Caco-2 (cell line): ENCODE measurements at regions of chr1 and their contacts with region 1.

Region 1: GRCh38 chr1:178542560-178543356 is 29.8 kb downstream of the TEX35 start:
- DNase-seq: peak; percentile 88 to 97
- H3K4me3 ChIP-seq: peak overlapping the region; percentile 72
- H3K4me3 Mint-ChIP-seq: peak overlapping the region; percentile 90
- H3K27ac Mint-ChIP-seq: peak overlapping the region; percentile 91
- H3K4me1 ChIP-seq: peaks cover 21% of the 10 kb centered on the region
- H3K4me1 Mint-ChIP-seq: peaks cover 13% of the 10 kb centered on the region
- H3K27me3 ChIP-seq: no peaks in the 10 kb centered on the region
- H3K27me3 Mint-ChIP-seq: no peaks in the 10 kb centered on the region
- CTCF ChIP-seq: peak; percentile 85 to 98

Region 2: GRCh38 chr1:177629526-177629925 is 913.2 kb before region 1 on chr1:
- CTCF ChIA-PET with region 1: no interaction called
- POLR2A ChIA-PET with region 1: no interaction called
- intact Hi-C with region 1: no loop called
- DNase-seq: no peak
- H3K4me3 ChIP-seq: no peak overlapping the region
- H3K4me3 Mint-ChIP-seq: no peak overlapping the region
- H3K27ac Mint-ChIP-seq: no peak overlapping the region
- H3K4me1 ChIP-seq: no peaks in the 10 kb centered on the region
- H3K4me1 Mint-ChIP-seq: no peaks in the 10 kb centered on the region
- H3K27me3 ChIP-seq: no peaks in the 10 kb centered on the region
- H3K27me3 Mint-ChIP-seq: peaks cover 7% of the 10 kb centered on the region
- CTCF ChIP-seq: no peak

Region 3: GRCh38 chr1:178267646-178268094 is 275.1 kb before region 1 on chr1:
- CTCF ChIA-PET with region 1: interaction called, 13 read pairs
- POLR2A ChIA-PET with region 1: no interaction called
- intact Hi-C with region 1: no loop called
- DNase-seq: peak; percentile 34 to 47
- H3K4me3 ChIP-seq: no peak overlapping the region
- H3K4me3 Mint-ChIP-seq: peak overlapping the region; percentile 59
- H3K27ac Mint-ChIP-seq: peak overlapping the region; percentile 96
- H3K4me1 ChIP-seq: peaks cover 73% of the 10 kb centered on the region
- H3K4me1 Mint-ChIP-seq: peaks cover 48% of the 10 kb centered on the region
- H3K27me3 ChIP-seq: no peaks in the 10 kb centered on the region
- H3K27me3 Mint-ChIP-seq: no peaks in the 10 kb centered on the region
- CTCF ChIP-seq: no peak

Region 4: DNA sequence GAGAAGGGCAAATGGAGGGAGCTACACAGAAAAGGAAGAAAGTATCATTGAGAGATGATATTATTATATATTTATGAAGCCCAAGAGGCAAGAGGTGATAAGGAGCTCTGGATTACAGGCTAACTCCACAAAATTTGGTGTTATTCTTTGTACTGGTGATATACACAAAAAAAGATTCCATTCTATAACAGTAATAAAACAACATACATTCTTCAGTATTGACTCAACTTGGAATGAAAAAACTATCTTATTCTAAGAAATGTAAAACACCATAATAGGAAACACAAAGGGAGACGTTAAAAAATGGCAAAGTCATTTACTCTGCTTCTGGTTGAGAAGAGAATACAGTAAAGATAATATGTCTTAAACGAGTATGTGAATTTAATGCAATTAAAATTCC is 69.5 kb after region 1 on chr1:
- CTCF ChIA-PET with region 1: no interaction called
- POLR2A ChIA-PET with region 1: no interaction called
- intact Hi-C with region 1: loop called (anchors 5 kb)
- DNase-seq: no peak
- H3K4me3 ChIP-seq: no peak overlapping the region
- H3K4me3 Mint-ChIP-seq: no peak overlapping the region
- H3K27ac Mint-ChIP-seq: no peak overlapping the region
- H3K4me1 ChIP-seq: no peaks in the 10 kb centered on the region
- H3K4me1 Mint-ChIP-seq: no peaks in the 10 kb centered on the region
- H3K27me3 ChIP-seq: no peaks in the 10 kb centered on the region
- H3K27me3 Mint-ChIP-seq: no peaks in the 10 kb centered on the region
- CTCF ChIP-seq: no peak

Region 5: DNA sequence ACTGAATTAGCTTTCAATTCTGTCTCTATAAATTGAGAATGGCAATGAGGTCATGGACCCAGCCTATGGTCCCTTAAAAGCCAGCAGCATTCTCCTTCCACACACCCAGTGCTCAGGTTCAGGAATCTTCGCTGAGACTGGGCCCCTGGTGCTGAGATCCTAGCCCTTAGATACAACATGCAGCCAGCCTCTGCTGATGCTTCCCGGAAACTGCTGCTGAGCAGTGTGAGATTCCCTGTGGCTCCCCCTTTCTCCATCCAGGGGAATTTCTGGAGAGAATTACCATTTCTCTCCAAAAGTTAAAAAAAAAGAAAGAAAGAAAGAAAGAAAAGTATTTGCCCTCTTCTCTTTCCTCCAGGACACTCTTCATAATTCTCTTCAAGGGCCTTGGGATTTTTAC is 150.6 kb after region 1 on chr1:
- CTCF ChIA-PET with region 1: no interaction called
- POLR2A ChIA-PET with region 1: no interaction called
- intact Hi-C with region 1: loop called (anchors 1 kb)
- DNase-seq: no peak
- H3K4me3 ChIP-seq: no peak overlapping the region
- H3K4me3 Mint-ChIP-seq: no peak overlapping the region
- H3K27ac Mint-ChIP-seq: no peak overlapping the region
- H3K4me1 ChIP-seq: no peaks in the 10 kb centered on the region
- H3K4me1 Mint-ChIP-seq: no peaks in the 10 kb centered on the region
- H3K27me3 ChIP-seq: no peaks in the 10 kb centered on the region; the same call in 1 of the 2 replicates
- H3K27me3 Mint-ChIP-seq: no peaks in the 10 kb centered on the region
- CTCF ChIP-seq: peak in 1 of 2 experiments; percentile 41

Region 6: GRCh38 chr1:178749581-178750166 is 206.9 kb after region 1 on chr1:
- CTCF ChIA-PET with region 1: interaction called, 41 read pairs
- POLR2A ChIA-PET with region 1: no interaction called
- intact Hi-C with region 1: loop called (anchors 1 kb)
- DNase-seq: no peak
- H3K4me3 ChIP-seq: no peak overlapping the region
- H3K4me3 Mint-ChIP-seq: no peak overlapping the region
- H3K27ac Mint-ChIP-seq: no peak overlapping the region
- H3K4me1 ChIP-seq: no peaks in the 10 kb centered on the region
- H3K4me1 Mint-ChIP-seq: no peaks in the 10 kb centered on the region
- H3K27me3 ChIP-seq: no peaks in the 10 kb centered on the region
- H3K27me3 Mint-ChIP-seq: no peaks in the 10 kb centered on the region
- CTCF ChIP-seq: no peak

Region 7: DNA sequence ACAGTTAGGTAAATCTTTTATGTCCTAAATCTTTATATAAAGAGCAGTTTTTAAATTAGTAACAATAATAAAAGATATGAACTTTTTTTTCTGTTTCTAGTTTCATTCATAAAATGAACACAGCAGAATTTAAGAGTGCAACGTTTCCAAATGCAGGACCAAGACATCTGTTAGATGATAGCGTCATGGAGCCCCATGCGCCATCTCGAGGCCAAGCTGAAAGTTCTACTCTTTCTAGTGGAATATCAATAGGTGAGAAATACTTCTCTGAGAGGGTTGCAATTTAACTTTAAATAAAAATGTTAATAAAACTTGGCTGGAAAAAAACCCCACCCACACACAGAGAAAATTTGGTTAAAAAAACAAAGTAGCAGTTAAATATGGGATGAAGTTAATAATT is 343.1 kb after region 1 on chr1:
- CTCF ChIA-PET with region 1: no interaction called
- POLR2A ChIA-PET with region 1: no interaction called
- intact Hi-C with region 1: loop called (anchors 5 kb)
- DNase-seq: peak in 1 of 2 experiments; percentile 11
- H3K4me3 ChIP-seq: no peak overlapping the region
- H3K4me3 Mint-ChIP-seq: no peak overlapping the region
- H3K27ac Mint-ChIP-seq: no peak overlapping the region
- H3K4me1 ChIP-seq: no peaks in the 10 kb centered on the region
- H3K4me1 Mint-ChIP-seq: no peaks in the 10 kb centered on the region
- H3K27me3 ChIP-seq: no peaks in the 10 kb centered on the region
- H3K27me3 Mint-ChIP-seq: no peaks in the 10 kb centered on the region
- CTCF ChIP-seq: peak in 1 of 2 experiments; percentile 39

Region 8: DNA sequence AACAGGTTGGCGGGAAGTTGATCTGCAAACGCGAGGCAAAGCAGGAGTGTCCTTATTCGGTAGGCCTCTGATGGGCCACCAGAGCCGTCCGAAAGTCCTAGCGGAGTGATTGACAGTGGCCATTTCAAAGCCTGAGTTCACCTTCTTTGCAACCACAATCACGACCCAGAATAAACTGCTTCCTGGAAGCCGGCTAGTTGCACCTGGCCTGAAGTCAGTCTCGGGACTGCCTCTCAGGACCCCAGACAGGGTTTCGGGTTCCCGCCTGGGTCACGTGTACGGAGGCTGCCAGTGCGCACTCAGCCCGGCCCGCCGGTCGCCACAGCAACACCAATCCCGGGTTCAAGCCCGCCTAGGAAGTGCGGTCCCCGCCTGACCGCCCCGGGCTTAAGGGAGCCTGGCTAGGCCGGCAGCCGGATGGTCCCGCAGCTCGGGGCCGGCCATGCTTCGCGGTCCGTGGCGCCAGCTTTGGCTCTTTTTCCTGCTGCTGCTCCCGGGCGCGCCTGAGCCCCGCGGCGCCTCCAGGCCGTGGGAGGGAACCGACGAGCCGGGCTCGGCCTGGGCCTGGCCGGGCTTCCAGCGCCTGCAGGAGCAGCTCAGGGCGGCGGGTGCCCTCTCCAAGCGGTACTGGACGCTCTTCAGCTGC is 539.1 kb after region 1 on chr1 and contains the start of gene TOR3A:
- CTCF ChIA-PET with region 1: no interaction called
- POLR2A ChIA-PET with region 1: no interaction called
- intact Hi-C with region 1: loop called (anchors 2 kb)
- DNase-seq: peak; percentile 93 to 94
- H3K4me3 ChIP-seq: peak within 1 kb of the TSS; percentile 97
- H3K4me3 Mint-ChIP-seq: peak within 1 kb of the TSS; percentile 98
- H3K27ac Mint-ChIP-seq: peak within 1 kb of the TSS; percentile 96
- H3K4me1 ChIP-seq: peaks cover 5% of the 10 kb centered on the region; the same call in 1 of the 2 replicates
- H3K4me1 Mint-ChIP-seq: peaks cover 9% of the 10 kb centered on the region
- H3K27me3 ChIP-seq: no peaks in the 10 kb centered on the region
- H3K27me3 Mint-ChIP-seq: no peaks in the 10 kb centered on the region
- CTCF ChIP-seq: no peak
- total RNA-seq, gene TOR3A: 25.0 and 25.2 TPM in 2 replicates